A673 (cell line): ENCODE measurements at regions of chrX and their contacts with region 1.

Region 1: GRCh38 chrX:120452131-120452530 is 17.0 kb downstream of the LAMP2 start:
- DNase-seq: peak; percentile 56
- H3K4me3 ChIP-seq: no peak overlapping the region
- H3K27ac ChIP-seq: no peak overlapping the region
- H3K4me1 ChIP-seq: no peaks in the 10 kb centered on the region
- H3K27me3 ChIP-seq: no peaks in the 10 kb centered on the region
- CTCF ChIP-seq: peak; percentile 64

Region 2: DNA sequence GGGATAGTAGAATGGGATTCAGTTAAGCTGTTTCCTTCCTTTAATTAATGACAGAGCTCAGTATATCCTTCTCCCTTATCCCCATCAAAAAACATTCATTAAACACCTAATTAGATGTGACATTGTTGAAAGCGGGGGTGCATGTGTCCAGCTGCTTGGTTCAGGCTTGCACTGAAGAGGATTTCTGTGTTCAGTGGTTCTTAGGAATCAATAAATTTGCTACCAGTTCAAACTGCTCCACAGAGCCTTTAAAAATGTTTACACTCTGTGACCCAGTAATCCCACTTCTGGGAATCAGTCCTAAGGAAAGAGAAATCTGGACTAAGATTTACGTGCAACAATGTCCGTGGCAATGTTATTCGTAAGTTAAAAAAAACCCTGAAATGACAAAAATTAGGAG is 133.7 kb before region 1 on chrX:
- CTCF ChIA-PET with region 1: interaction called, 3 read pairs
- POLR2A ChIA-PET with region 1: no interaction called
- intact Hi-C with region 1: loop called (anchors 2 kb)
- DNase-seq: no peak
- H3K4me3 ChIP-seq: no peak overlapping the region
- H3K27ac ChIP-seq: no peak overlapping the region
- H3K4me1 ChIP-seq: no peaks in the 10 kb centered on the region
- H3K27me3 ChIP-seq: peaks cover 4% of the 10 kb centered on the region
- CTCF ChIP-seq: no peak

Region 3: DNA sequence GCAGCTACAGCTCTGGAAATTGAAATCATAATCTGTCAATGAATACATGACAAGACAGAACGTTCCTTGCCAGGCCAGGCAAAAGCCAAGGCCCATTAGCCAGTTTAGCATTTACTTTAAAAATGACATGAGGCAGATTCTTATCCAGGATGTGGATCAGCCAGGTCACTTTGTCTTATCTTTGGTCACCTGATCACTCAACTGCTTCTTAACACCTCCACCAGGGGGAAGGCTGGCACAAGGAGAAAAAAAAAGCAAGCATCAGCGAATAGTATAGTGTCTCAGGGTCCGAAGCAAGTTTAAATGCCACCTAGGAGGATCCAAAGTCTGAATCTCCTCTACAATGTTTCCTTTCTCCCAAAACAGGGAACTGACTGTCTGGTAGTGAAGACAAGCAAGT is 71.4 kb before region 1 on chrX:
- CTCF ChIA-PET with region 1: interaction called, 4 read pairs
- POLR2A ChIA-PET with region 1: no interaction called
- intact Hi-C with region 1: loop called (anchors 1 kb)
- DNase-seq: peak; percentile 32
- H3K4me3 ChIP-seq: no peak overlapping the region
- H3K27ac ChIP-seq: no peak overlapping the region
- H3K4me1 ChIP-seq: no peaks in the 10 kb centered on the region
- H3K27me3 ChIP-seq: no peaks in the 10 kb centered on the region
- CTCF ChIP-seq: peak; percentile 48